Colonic mucosa (tissue), 4 donors: ENCODE measurements at regions of chr10 and their contacts with region 1.

Region 1: GRCh38 chr10:114714281-114714741 is 56.2 kb upstream of the ABLIM1 start:
- DNase-seq: peak; percentile 71
- H3K4me3 ChIP-seq: no peak overlapping the region
- H3K27ac ChIP-seq: no peak overlapping the region
- H3K4me1 ChIP-seq: no peaks in the 10 kb centered on the region
- H3K27me3 ChIP-seq: no peaks in the 10 kb centered on the region
- CTCF ChIP-seq: no peak

Region 2: GRCh38 chr10:114767101-114767985 is 53.0 kb after region 1 on chr10:
- intact Hi-C with region 1: loop called (anchors 10 kb)
- DNase-seq: peak; percentile 73
- H3K4me3 ChIP-seq: peak overlapping the region; percentile 68
- H3K27ac ChIP-seq: peak overlapping the region; percentile 56
- H3K4me1 ChIP-seq: no peaks in the 10 kb centered on the region
- H3K27me3 ChIP-seq: no peaks in the 10 kb centered on the region
- CTCF ChIP-seq: no peak